Uterus (tissue), 4 donors: ENCODE measurements at regions of chr14 and their contacts with region 1.

Region 1: GRCh38 chr14:102516531-102517415 is 7.2 kb upstream of the ANKRD9 start:
- DNase-seq: peak in 1 of 2 donors; percentile 67
- H3K4me3 ChIP-seq: peak overlapping the region; percentile 43 to 51
- H3K27ac ChIP-seq: peak overlapping the region in 1 of 2 donors; percentile 61
- H3K4me1 ChIP-seq: no peaks in the 10 kb centered on the region
- H3K27me3 ChIP-seq: no peaks in the 10 kb centered on the region
- CTCF ChIP-seq: peak; percentile 56 to 99 (median 96)
- POLR2A ChIP-seq: peak in 1 of 2 donors; percentile 23

Region 2: GRCh38 chr14:102437997-102438915 is 78.5 kb before region 1 on chr14:
- intact Hi-C with region 1: loop called (anchors 2 kb)
- DNase-seq: peak; percentile 82 to 86
- H3K4me3 ChIP-seq: peak overlapping the region in 1 of 2 donors; percentile 27
- H3K27ac ChIP-seq: no peak overlapping the region
- H3K4me1 ChIP-seq: no peaks in the 10 kb centered on the region
- H3K27me3 ChIP-seq: no peaks in the 10 kb centered on the region
- CTCF ChIP-seq: peak; percentile 71 to 82 (median 77)
- POLR2A ChIP-seq: no peak

Region 3: DNA sequence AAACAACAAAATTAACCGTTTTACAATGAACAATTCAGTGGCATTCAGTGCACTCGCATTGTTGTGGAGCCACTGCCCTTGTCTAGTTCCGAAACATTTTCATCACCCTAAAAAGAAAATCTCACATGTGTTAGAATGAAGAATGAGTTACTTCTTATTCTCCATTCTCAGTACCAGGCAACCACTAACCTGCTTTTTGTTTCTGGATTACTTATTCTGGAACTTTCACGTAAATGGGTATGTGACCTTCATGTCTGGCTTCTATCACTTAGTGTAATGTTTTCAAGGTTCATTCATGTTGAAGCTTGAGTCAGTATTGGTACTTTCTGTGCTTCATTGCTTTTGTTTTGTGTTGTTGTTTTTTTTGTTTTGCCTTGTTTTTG is 91.3 kb after region 1 on chr14:
- intact Hi-C with region 1: no loop called
- DNase-seq: no peak
- H3K4me3 ChIP-seq: no peak overlapping the region
- H3K27ac ChIP-seq: no peak overlapping the region
- H3K4me1 ChIP-seq: no peaks in the 10 kb centered on the region
- H3K27me3 ChIP-seq: no peaks in the 10 kb centered on the region
- CTCF ChIP-seq: no peak
- POLR2A ChIP-seq: no peak

Region 4: GRCh38 chr14:103085106-103086091 is 568.6 kb after region 1 on chr14:
- intact Hi-C with region 1: no loop called
- DNase-seq: no peak
- H3K4me3 ChIP-seq: no peak overlapping the region
- H3K27ac ChIP-seq: no peak overlapping the region
- H3K4me1 ChIP-seq: peaks cover 0 to 4% of the 10 kb centered on the region in 2 donors
- H3K27me3 ChIP-seq: no peaks in the 10 kb centered on the region
- CTCF ChIP-seq: no peak
- POLR2A ChIP-seq: no peak